ENCODE measurements at regions of chr19 and their contacts with region 1.

Region 1: DNA sequence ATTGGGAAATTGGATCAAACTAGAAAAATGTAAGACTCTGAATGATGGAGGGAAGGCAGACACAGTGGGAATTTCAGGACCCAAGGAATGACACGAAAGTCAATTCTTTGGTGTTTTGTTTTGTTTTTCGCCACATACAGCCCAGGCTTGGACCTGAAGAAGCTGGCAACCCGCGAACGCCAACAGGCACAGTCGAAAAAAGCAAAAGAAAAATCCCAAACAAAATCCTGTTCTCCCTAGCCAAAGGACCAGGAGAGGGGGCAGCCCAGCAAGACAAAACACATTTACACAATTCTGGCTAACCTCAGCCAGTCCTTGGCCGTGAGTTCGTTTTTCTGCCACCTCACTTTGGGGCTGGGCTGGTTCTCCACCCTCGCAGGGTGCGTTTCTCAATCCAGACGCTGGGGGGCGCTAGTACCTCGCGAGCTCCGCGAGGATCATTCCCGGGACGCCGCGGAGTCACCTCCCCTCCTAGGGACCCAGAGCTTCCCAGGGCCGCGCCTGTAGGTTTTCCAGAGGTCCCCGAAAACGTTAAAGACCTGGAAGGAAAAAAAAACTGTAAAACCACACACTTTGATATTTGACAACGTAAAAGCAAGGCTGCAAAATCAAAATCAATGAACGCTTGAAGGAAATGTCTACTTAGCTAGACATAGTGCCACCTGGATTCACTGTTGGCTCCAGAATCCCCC is 34.9 kb upstream of the TPM4 start:
- DNase-seq: peak; percentile 60 to 75 (median 66)
- H3K4me3 ChIP-seq: no peak overlapping the region
- H3K4me3 Mint-ChIP-seq: peak overlapping the region in 6 of 8 donors; percentile 7 to 63 (median 29)
- H3K27ac ChIP-seq: no peak overlapping the region
- H3K27ac Mint-ChIP-seq: peak overlapping the region in 1 of 7 donors; percentile 29
- H3K4me1 ChIP-seq: peaks cover 10% of the 10 kb centered on the region
- H3K4me1 Mint-ChIP-seq: peaks cover 7 to 17% (median 12%) of the 10 kb centered on the region in 4 donors
- H3K27me3 ChIP-seq: no peaks in the 10 kb centered on the region
- H3K27me3 Mint-ChIP-seq: peaks cover 0 to 1% of the 10 kb centered on the region in 2 donors

Region 2: DNA sequence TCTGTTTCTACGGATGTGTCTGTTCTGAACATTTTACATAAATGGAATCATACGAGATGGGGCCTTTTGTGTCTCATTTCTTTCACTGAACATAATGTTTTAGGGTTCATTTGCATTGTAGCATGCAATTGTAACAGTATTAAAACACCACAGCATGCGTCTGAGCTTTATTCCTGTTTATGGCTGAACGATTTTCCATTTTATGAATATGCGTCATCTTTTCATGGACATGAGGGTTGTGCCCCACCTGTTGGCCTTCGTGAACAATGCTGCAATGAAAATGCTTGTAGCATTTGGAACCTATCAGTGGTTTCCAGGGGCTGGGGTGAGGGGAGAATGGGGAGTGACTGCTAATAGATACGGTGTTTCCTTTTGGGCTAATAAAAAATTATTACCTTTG is 231.1 kb before region 1 on chr19:
- CTCF ChIA-PET with region 1: interaction called, 6 read pairs
- POLR2A ChIA-PET with region 1: no interaction called
- intact Hi-C with region 1: loop called (anchors 10 kb)
- DNase-seq: no peak
- H3K4me3 ChIP-seq: no peak overlapping the region
- H3K4me3 Mint-ChIP-seq: no peak overlapping the region
- H3K27ac ChIP-seq: no peak overlapping the region
- H3K27ac Mint-ChIP-seq: no peak overlapping the region
- H3K4me1 ChIP-seq: peaks cover 11% of the 10 kb centered on the region
- H3K4me1 Mint-ChIP-seq: peaks cover 6 to 24% (median 14%) of the 10 kb centered on the region in 4 donors
- H3K27me3 ChIP-seq: no peaks in the 10 kb centered on the region
- H3K27me3 Mint-ChIP-seq: peaks cover 8 to 22% of the 10 kb centered on the region in 2 donors

Region 3: GRCh38 chr19:16025108-16026101 is 16.0 kb before region 1 on chr19:
- CTCF ChIA-PET with region 1: no interaction called
- POLR2A ChIA-PET with region 1: no interaction called
- intact Hi-C with region 1: no loop called
- DNase-seq: no peak
- H3K4me3 ChIP-seq: no peak overlapping the region
- H3K4me3 Mint-ChIP-seq: no peak overlapping the region
- H3K27ac ChIP-seq: no peak overlapping the region
- H3K27ac Mint-ChIP-seq: peak overlapping the region in 1 of 7 donors; percentile 30
- H3K4me1 ChIP-seq: no peaks in the 10 kb centered on the region
- H3K4me1 Mint-ChIP-seq: no peaks in the 10 kb centered on the region
- H3K27me3 ChIP-seq: no peaks in the 10 kb centered on the region
- H3K27me3 Mint-ChIP-seq: no peaks in the 10 kb centered on the region

Region 4: GRCh38 chr19:16070366-16070990 is 29.0 kb after region 1 on chr19:
- CTCF ChIA-PET with region 1: interaction called, 11 read pairs
- POLR2A ChIA-PET with region 1: interaction called, 8 read pairs
- intact Hi-C with region 1: no loop called
- DNase-seq: peak; percentile 87 to 98 (median 94)
- H3K4me3 ChIP-seq: peak overlapping the region in 1 of 2 donors; percentile 46
- H3K4me3 Mint-ChIP-seq: peak overlapping the region in 3 of 8 donors; percentile 60 to 80 (median 77)
- H3K27ac ChIP-seq: peak overlapping the region; percentile 89
- H3K27ac Mint-ChIP-seq: no peak overlapping the region
- H3K4me1 ChIP-seq: peaks cover 78% of the 10 kb centered on the region
- H3K4me1 Mint-ChIP-seq: peaks cover 25 to 46% (median 38%) of the 10 kb centered on the region in 4 donors
- H3K27me3 ChIP-seq: no peaks in the 10 kb centered on the region
- H3K27me3 Mint-ChIP-seq: no peaks in the 10 kb centered on the region

Region 5: DNA sequence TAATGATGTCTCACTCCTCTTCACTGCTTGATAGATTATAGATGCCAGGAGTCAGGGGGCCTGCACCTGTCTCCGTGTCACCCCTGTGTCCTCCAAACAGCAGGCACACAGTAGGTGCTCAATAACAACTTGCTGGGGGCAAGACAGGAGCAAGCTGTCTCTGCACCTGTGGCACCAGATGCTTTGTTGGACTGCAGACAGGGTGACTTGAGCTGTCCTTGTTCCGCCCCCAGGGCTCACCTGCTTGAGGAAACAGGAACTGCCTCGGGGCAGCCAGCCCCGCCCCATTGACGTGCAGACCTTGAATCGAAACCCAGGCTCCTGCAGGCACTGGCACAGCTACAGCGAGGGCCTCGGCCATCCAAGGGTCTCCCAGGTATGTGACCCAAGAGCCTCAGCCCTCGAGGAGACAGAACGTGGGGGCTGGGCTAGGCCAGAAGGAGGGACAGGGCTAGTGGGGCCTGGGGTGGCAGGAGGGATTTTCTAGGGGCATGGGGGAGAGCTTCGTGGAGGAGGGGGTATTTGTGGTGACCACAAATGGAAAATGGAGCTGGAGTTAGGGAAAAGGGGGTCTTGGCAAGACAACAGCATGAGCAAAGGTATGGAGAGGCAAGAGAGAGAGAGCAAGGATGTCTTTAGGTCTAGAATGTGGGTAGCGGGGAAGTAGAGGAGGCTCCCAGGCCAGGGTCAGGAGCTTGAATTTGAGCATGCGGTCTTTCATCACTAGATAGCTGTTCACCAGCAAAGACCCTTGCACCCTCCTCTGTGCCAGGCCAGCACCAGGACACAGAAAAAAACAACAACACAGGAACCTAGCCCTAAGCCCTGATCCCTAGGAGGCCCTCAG is 102.2 kb after region 1 on chr19 and contains the start of gene HSH2D:
- CTCF ChIA-PET with region 1: interaction called, 12 read pairs
- POLR2A ChIA-PET with region 1: no interaction called
- intact Hi-C with region 1: no loop called
- DNase-seq: peak; percentile 76 to 87 (median 79)
- H3K4me3 ChIP-seq: peak within 1 kb of the TSS; percentile 74 to 84
- H3K4me3 Mint-ChIP-seq: peak within 1 kb of the TSS; percentile 91 to 97 (median 95)
- H3K27ac ChIP-seq: peak within 1 kb of the TSS; percentile 82
- H3K27ac Mint-ChIP-seq: peak within 1 kb of the TSS; percentile 83 to 99 (median 96)
- H3K4me1 ChIP-seq: peaks cover 42% of the 10 kb centered on the region
- H3K4me1 Mint-ChIP-seq: peaks cover 20 to 51% (median 33%) of the 10 kb centered on the region in 4 donors
- H3K27me3 ChIP-seq: no peaks in the 10 kb centered on the region
- H3K27me3 Mint-ChIP-seq: no peaks in the 10 kb centered on the region
- total RNA-seq, gene HSH2D: 17.8 to 18.8 TPM